ENCODE measurements at regions of chr15 and their contacts with region 1.

Region 1: DNA sequence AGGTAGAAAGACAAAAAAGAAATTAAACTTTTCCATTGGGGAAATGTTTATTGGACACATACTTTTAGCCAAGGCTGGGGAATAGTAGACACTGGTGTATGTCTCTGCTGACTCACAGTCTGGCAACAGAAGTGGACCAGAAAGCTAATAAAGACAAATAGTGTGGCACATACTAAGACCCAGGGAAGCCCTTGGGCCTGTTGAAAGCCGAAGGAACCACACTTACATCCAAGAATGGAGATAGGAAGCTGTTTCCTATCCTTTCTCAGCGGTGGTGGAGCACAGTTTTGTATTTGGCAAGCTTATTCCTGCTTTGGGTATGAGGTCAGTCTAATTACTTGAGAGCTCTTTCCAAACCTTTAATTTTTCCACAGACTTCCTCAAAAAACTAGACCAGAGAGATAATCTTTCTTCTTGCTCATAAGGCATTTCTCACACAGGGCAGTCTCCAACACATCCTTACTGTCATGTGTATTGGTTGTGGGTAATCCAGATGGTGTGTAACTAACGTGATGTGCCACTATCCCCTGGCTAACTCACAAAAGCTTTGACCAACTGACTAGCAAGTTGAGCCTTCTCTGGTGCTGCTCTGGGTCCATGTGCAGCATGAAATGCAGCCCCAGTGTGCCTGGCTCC is 279.1 kb upstream of the IGF1R start:
- DNase-seq: peak; percentile 66
- H3K4me3 ChIP-seq: no peak overlapping the region
- H3K27ac ChIP-seq: peak overlapping the region; percentile 56 to 80 (median 69)
- H3K4me1 ChIP-seq: peaks cover 0 to 22% (median 13%) of the 10 kb centered on the region in 4 donors
- H3K27me3 ChIP-seq: no peaks in the 10 kb centered on the region
- CTCF ChIP-seq: no peak
- EP300 ChIP-seq: no peak
- POLR2A ChIP-seq: no peak

Region 2: DNA sequence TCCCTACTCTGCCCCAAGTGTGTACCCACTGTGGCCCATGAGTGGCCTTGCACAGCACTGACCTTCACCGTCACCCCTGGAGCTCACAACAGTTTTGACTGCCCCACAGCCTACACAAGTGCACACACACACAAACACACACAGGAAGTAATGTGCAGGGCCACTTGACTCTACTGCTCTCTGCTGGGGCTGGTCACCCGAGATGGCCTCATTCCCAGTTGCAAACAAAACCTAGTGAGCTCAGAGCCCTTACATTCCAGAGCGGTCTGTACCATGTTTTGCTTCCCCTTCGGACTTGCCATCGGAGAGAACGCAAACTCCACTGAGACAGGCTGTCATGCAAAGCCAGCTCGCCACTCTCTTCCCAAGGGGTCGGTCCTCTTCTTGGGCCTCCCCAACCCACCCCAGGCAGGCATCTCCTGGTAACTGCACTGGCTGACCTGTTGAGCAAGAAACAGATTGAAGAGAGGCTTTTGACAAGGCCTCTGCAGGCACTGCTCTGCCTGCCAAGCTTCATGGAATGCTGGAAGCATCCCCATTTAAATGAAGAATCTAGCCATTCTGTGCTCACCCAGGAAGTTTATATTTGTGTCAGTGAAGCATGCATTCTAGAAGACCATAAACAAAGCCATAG is 47.1 kb after region 1 on chr15:
- intact Hi-C with region 1: loop called (anchors 5 kb)
- DNase-seq: no peak
- H3K4me3 ChIP-seq: no peak overlapping the region
- H3K27ac ChIP-seq: peak overlapping the region; percentile 55 to 78 (median 67)
- H3K4me1 ChIP-seq: peaks cover 0 to 56% (median 41%) of the 10 kb centered on the region in 4 donors
- H3K27me3 ChIP-seq: no peaks in the 10 kb centered on the region
- CTCF ChIP-seq: no peak
- EP300 ChIP-seq: no peak
- POLR2A ChIP-seq: no peak